ENCODE measurements at regions of chr19 and their contacts with region 1.

Region 1: GRCh38 chr19:33795370-33796163 is 1.1 kb upstream of the KCTD15 start:
- DNase-seq: peak; percentile 82
- H3K27ac ChIP-seq: peak overlapping the region; percentile 97
- CTCF ChIP-seq: peak; percentile 96

Region 2: GRCh38 chr19:33809957-33810356 is 14.4 kb after region 1 on chr19:
- CTCF ChIA-PET with region 1: no interaction called
- POLR2A ChIA-PET with region 1: no interaction called
- DNase-seq: no peak
- H3K27ac ChIP-seq: peak overlapping the region; percentile 77
- CTCF ChIP-seq: no peak

Region 3: GRCh38 chr19:33977756-33978685 is 182.5 kb after region 1 on chr19:
- CTCF ChIA-PET with region 1: no interaction called
- POLR2A ChIA-PET with region 1: no interaction called
- DNase-seq: no peak
- H3K27ac ChIP-seq: no peak overlapping the region
- CTCF ChIP-seq: no peak

Region 4: GRCh38 chr19:33998739-33999345 is 203.3 kb after region 1 on chr19:
- CTCF ChIA-PET with region 1: interaction called, 14 read pairs
- POLR2A ChIA-PET with region 1: no interaction called
- DNase-seq: peak; percentile 20
- H3K27ac ChIP-seq: no peak overlapping the region
- CTCF ChIP-seq: peak; percentile 60

Measured in RWPE1 (cell line).